Gastrocnemius medialis (tissue), 4 donors: ENCODE measurements at regions of chr2 and their contacts with region 1.

Region 1: DNA sequence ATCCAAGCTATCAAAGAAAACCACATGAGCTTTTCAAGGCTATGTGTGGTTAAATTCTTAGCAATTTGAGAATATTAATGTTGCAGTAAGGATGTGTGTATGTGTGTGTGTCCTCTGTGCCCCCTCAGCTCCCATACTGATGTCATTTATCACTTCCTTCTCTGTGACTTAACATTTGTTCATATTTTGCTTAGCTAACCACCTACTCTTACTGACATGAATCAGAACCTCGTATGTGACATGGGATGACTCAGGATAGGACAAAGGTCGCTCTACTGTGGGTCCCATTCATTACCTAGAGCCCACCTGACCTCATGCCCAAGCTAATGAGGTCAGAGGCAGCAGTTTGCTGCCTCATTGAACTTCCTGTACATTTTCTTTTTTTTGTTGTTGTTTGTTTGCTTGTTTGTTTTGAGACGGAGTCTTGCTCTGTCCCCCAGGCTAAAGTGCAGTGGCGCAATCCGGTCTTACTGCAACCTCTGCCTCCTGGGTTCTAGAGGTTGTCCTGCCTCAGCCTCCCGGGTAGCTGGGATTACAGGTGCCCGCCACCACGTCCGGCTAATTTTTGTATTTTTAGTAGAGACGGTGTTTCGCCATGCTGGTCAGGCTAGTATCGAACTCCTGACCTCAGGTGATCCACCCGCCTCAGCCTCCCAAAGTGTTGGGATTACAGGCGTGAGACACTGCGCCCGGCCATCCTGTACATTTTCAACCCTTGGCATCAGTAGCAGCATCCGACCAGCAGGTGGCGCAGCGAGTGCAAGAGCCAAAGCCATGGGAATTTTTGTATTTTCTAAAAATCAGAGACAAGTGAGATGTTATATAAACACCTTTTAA is 36.4 kb downstream of the MOGAT1 start:
- DNase-seq: peak; percentile 48 to 61
- ATAC-seq: peak; percentile 40 to 47
- H3K4me3 ChIP-seq: no peak overlapping the region
- H3K27ac ChIP-seq: peak overlapping the region in 3 of 4 donors; percentile 84 to 87 (median 85)
- H3K4me1 ChIP-seq: peaks cover 15 to 18% of the 10 kb centered on the region in 2 donors
- H3K27me3 ChIP-seq: no peaks in the 10 kb centered on the region
- CTCF ChIP-seq: peak; percentile 92 to 96 (median 95)
- POLR2A ChIP-seq: no peak

Region 2: GRCh38 chr2:222592176-222592575 is 115.7 kb before region 1 on chr2:
- in situ Hi-C with region 1: no loop called
- intact Hi-C with region 1: no loop called
- DNase-seq: no peak
- ATAC-seq: no peak
- H3K4me3 ChIP-seq: no peak overlapping the region
- H3K27ac ChIP-seq: no peak overlapping the region
- H3K4me1 ChIP-seq: peaks cover 0 to 3% of the 10 kb centered on the region in 2 donors
- H3K27me3 ChIP-seq: no peaks in the 10 kb centered on the region
- CTCF ChIP-seq: no peak
- POLR2A ChIP-seq: no peak

Region 3: DNA sequence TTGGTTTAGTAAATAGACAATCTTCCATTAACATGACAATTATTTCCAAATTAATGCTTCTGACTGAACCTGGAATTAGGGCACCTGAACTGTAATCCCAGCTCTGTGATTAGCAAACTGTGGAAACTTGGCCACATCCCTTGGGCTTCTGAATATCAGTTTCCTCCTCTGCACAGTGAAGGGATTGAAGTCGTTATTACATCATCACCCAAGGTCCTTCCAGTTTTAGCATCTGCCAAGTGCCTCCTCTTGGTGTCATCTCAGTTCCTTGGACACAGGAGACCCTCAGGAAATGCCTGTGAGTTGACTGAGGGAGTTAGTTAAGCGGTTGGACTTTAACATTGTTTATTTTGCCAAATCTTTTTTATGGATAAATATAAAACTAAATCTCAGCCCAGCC is 28.4 kb after region 1 on chr2:
- in situ Hi-C with region 1: no loop called
- intact Hi-C with region 1: loop called (anchors 2 kb)
- DNase-seq: peak in 1 of 2 donors; percentile 61
- ATAC-seq: peak; percentile 85 to 93
- H3K4me3 ChIP-seq: no peak overlapping the region
- H3K27ac ChIP-seq: peak overlapping the region in 3 of 4 donors; percentile 37 to 83 (median 82)
- H3K4me1 ChIP-seq: peaks cover 35 to 45% of the 10 kb centered on the region in 2 donors
- H3K27me3 ChIP-seq: no peaks in the 10 kb centered on the region
- CTCF ChIP-seq: no peak
- POLR2A ChIP-seq: no peak

Region 4: DNA sequence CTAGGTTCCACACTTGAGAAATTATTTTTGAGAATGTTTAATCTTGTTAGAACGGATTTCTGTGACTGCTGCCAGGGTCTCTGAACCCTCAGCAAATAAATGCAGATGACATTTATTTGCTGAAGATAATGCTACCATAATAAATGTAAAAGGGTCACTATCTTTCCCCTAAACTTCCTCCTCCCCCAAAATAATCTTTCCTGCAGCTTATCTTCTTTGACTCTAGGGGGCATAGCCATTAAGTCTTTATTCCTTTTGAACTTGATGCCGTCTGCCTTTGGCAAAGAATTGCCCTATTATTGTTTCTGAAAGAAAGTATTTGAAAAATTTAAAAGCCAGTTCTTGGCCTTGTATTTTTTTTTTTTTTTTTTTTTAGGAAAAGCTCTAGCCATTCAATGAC is 89.4 kb after region 1 on chr2:
- in situ Hi-C with region 1: no loop called
- intact Hi-C with region 1: loop called (anchors 2 kb)
- DNase-seq: no peak
- ATAC-seq: peak in 1 of 2 donors; percentile 51
- H3K4me3 ChIP-seq: no peak overlapping the region
- H3K27ac ChIP-seq: peak overlapping the region in 2 of 4 donors; percentile 30 to 46
- H3K4me1 ChIP-seq: peaks cover 18 to 20% of the 10 kb centered on the region in 2 donors
- H3K27me3 ChIP-seq: no peaks in the 10 kb centered on the region
- CTCF ChIP-seq: peak in 3 of 5 experiments; percentile 41 to 55 (median 49)
- POLR2A ChIP-seq: no peak

Region 5: GRCh38 chr2:222860740-222861410 is 153.0 kb after region 1 on chr2 and contains the start of gene ACSL3:
- in situ Hi-C with region 1: no loop called
- intact Hi-C with region 1: loop called (anchors 1 kb)
- DNase-seq: peak; percentile 95 to 96
- ATAC-seq: peak; percentile 86 to 89
- H3K4me3 ChIP-seq: peak within 1 kb of the TSS; percentile 68 to 96 (median 81)
- H3K27ac ChIP-seq: peak within 1 kb of the TSS; percentile 86 to 98 (median 90)
- H3K4me1 ChIP-seq: peaks cover 45 to 51% of the 10 kb centered on the region in 2 donors
- H3K27me3 ChIP-seq: no peaks in the 10 kb centered on the region
- CTCF ChIP-seq: peak in 3 of 5 experiments; percentile 15 to 43 (median 32)
- POLR2A ChIP-seq: peak; percentile 96 to 99
- total RNA-seq, gene ACSL3: 34.7 to 56.8 (median 38.2) TPM

Region 6: DNA sequence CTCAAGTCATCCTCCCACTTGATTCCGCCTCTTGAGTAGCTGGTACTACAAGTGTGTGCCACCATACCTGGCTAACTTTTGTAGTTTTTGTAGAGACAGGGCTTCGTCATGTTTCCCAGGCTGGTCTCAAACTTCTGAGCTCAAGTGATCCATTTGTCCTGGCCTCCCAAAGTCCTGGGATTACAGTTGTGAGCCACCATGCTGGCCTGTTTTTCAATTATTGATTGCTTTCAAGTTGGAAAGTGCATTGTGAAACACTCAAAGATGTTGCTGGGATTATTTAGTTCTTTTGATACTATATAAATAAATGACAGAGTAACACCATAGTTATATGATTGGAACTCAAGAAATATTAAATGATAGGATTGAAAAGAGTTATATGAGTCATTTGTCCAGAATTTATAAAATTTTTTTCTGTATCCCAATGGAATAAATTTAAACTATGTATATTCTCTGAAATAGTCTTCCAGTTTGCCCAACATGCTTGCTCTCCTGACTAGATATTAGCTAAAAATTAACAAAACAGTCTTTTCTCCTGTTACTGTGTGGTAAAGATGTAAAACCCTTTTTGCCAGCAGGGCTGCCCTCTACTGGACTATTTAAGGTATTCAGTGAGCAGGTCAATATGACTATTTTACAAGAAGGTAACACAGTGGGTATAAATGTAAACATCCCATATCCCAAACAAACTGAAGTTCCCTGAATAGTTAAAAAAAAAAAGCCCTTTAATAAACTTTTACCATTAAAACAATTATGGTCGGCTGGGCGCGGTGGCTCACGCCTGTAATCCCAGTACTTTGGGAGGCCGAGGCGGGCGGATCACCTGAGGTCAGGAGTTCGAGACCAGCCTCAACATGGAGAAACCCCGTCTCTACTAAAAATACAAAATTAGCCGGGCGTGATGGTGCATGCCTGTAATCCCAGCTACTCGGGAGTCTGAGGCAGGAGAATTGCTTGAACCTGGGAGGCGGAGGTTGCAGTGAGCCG is 195.6 kb after region 1 on chr2:
- in situ Hi-C with region 1: loop called in 2 of 4 experiments (anchors 5 kb)
- intact Hi-C with region 1: loop called (anchors 1 kb)
- DNase-seq: no peak
- ATAC-seq: peak; percentile 58 to 70
- H3K4me3 ChIP-seq: no peak overlapping the region
- H3K27ac ChIP-seq: peak overlapping the region in 2 of 4 donors; percentile 32 to 42
- H3K4me1 ChIP-seq: peaks cover 44% of the 10 kb centered on the region in 2 donors
- H3K27me3 ChIP-seq: no peaks in the 10 kb centered on the region
- CTCF ChIP-seq: peak; percentile 52 to 75 (median 66)
- POLR2A ChIP-seq: no peak

Region 7: DNA sequence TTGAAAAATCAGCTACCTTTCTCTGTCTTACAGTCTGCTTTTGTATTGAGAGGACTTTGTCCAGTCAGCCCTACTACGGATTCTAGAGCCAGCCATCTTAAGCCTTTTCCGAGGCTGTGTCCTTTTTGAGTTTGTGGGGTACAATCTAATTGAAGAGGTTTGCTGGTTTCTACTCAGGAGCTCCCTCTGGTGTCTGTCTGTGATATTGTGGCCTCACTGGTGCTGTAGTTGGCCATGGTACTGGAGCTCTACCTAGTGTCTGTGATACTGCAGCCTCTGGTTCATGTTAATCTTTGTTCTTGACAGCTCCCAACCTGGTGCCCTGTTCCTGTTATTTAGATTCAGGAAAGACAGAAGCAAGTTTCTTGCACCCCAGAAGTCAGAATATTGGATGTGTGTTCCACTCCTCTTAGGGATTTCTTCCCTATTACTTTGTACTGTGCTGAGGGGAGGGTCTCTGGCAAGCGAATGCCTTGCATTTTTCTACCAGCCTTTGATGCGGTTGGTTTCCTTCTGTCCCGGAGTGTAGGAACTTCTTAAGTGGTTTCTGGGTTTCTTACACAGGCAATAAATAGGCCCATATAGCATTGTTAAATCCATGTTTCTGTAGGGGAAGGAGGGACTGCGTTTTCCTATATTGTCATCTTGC is 231.4 kb after region 1 on chr2:
- in situ Hi-C with region 1: no loop called
- intact Hi-C with region 1: loop called (anchors 5 kb)
- DNase-seq: peak in 1 of 2 donors; percentile 54
- ATAC-seq: peak; percentile 62 to 84
- H3K4me3 ChIP-seq: no peak overlapping the region
- H3K27ac ChIP-seq: no peak overlapping the region
- H3K4me1 ChIP-seq: no peaks in the 10 kb centered on the region
- H3K27me3 ChIP-seq: no peaks in the 10 kb centered on the region
- CTCF ChIP-seq: peak; percentile 61 to 76 (median 72)
- POLR2A ChIP-seq: no peak